Activated CD4-positive, alpha-beta T cell treated with anti-CD3 and anti-CD28 coated beads, Interleukin-2, amount 10 ng/mL, durations not matched to agents 24 days and 14 days (primary cell): ENCODE measurements at regions of chr10 and their contacts with region 1.

Region 1: GRCh38 chr10:22655311-22655981 is 58.9 kb downstream of the PIP4K2A start:
- DNase-seq: peak; percentile 80
- H3K4me3 Mint-ChIP-seq: peak overlapping the region; percentile 64
- H3K27ac Mint-ChIP-seq: peak overlapping the region; percentile 90
- H3K4me1 Mint-ChIP-seq: peaks cover 88% of the 10 kb centered on the region
- H3K27me3 Mint-ChIP-seq: no peaks in the 10 kb centered on the region

Region 2: DNA sequence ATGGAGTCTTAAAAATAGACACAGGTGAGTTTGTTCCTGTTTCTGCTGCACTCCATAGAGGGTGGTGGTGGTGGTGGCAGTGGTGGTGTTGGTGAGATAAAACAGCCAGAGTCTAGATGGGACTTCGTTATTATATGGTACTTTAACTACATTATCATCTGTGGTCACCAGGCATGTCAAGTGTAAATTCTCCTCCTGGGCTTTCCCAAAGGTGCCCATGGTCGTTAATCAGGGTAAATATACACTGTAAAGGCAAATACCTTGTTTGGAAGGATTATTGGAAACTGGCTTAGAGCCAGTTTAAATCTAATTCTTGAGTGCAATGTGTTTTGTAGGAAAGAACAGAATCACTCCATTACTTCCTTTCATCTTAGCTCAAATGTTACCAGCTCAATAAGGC is 360.8 kb before region 1 on chr10:
- intact Hi-C with region 1: no loop called
- DNase-seq: no peak
- H3K4me3 Mint-ChIP-seq: no peak overlapping the region
- H3K27ac Mint-ChIP-seq: no peak overlapping the region
- H3K4me1 Mint-ChIP-seq: no peaks in the 10 kb centered on the region
- H3K27me3 Mint-ChIP-seq: peaks cover 8% of the 10 kb centered on the region

Region 3: DNA sequence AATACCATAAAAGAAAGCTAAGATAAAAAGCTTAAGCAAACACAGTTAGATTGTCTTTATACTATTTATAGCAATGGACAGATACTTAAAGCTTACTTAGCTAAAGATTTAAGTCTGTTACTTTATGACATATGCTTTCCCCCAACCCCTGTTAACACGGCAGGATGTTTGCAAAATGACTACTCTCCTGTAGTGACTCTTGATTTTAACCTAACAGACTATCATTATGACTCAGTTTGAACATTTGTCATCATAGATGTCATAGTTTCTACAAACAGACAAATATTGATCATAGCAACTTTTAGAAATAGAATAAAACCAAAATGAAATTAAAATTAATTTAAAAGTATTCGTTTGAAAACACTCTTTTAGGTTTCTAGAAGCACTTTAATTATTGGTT is 347.1 kb before region 1 on chr10:
- intact Hi-C with region 1: loop called (anchors 10 kb)
- DNase-seq: peak; percentile 79
- H3K4me3 Mint-ChIP-seq: no peak overlapping the region
- H3K27ac Mint-ChIP-seq: no peak overlapping the region
- H3K4me1 Mint-ChIP-seq: peaks cover 10% of the 10 kb centered on the region
- H3K27me3 Mint-ChIP-seq: peaks cover 2% of the 10 kb centered on the region

Region 4: GRCh38 chr10:22573820-22574569 is 81.5 kb before region 1 on chr10:
- intact Hi-C with region 1: loop called (anchors 2 kb)
- DNase-seq: no peak
- H3K4me3 Mint-ChIP-seq: no peak overlapping the region
- H3K27ac Mint-ChIP-seq: no peak overlapping the region
- H3K4me1 Mint-ChIP-seq: peaks cover 36% of the 10 kb centered on the region
- H3K27me3 Mint-ChIP-seq: no peaks in the 10 kb centered on the region

Region 5: GRCh38 chr10:22611425-22612115 is 43.9 kb before region 1 on chr10:
- intact Hi-C with region 1: loop called (anchors 2 kb)
- DNase-seq: peak; percentile 92
- H3K4me3 Mint-ChIP-seq: peak overlapping the region; percentile 63
- H3K27ac Mint-ChIP-seq: peak overlapping the region; percentile 64
- H3K4me1 Mint-ChIP-seq: peaks cover 66% of the 10 kb centered on the region
- H3K27me3 Mint-ChIP-seq: no peaks in the 10 kb centered on the region

Region 6: GRCh38 chr10:22666287-22667092 is 11.0 kb after region 1 on chr10:
- intact Hi-C with region 1: loop called (anchors 1 kb)
- DNase-seq: peak; percentile 90
- H3K4me3 Mint-ChIP-seq: peak overlapping the region; percentile 90
- H3K27ac Mint-ChIP-seq: peak overlapping the region; percentile 94
- H3K4me1 Mint-ChIP-seq: peaks cover 52% of the 10 kb centered on the region
- H3K27me3 Mint-ChIP-seq: no peaks in the 10 kb centered on the region

Region 7: DNA sequence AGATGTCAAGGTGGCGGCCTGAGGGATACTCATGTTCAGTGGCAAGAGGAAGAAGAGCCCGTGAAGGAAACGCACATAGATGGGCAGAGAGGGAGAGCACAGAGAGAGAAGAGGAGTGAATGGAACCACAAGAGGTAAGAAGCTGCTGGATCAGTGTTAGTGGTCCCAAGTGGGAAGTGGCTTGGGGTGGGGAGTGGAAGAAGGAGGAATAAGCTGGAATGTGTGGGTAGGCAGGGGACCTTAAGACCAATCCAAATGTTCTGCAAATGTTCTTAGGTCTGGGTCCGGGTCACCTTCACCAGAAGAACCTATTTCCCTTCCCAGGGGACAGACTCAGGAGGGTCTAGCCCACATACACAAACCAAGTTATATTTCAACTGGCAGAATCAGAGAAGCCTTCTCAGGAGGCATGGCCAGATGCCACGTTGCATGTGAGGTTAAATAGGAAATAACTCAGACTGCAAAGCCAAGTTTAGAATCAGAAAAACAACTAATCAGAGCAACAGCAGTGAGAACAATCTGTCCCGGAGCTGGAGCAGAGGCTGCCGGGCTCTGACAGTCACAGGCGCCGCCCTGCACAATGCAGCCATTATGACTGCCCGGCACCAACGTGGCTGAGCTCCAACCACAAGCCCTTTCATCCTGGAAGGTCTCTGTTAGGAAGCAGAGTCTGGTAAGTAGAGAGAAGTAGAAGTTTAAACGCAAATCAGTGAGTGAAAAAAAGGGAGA is 193.8 kb after region 1 on chr10:
- intact Hi-C with region 1: no loop called
- DNase-seq: no peak
- H3K4me3 Mint-ChIP-seq: no peak overlapping the region
- H3K27ac Mint-ChIP-seq: no peak overlapping the region
- H3K4me1 Mint-ChIP-seq: peaks cover 2% of the 10 kb centered on the region
- H3K27me3 Mint-ChIP-seq: peaks cover 6% of the 10 kb centered on the region